ENCODE measurements at regions of chr6 and their contacts with region 1.

Region 1: DNA sequence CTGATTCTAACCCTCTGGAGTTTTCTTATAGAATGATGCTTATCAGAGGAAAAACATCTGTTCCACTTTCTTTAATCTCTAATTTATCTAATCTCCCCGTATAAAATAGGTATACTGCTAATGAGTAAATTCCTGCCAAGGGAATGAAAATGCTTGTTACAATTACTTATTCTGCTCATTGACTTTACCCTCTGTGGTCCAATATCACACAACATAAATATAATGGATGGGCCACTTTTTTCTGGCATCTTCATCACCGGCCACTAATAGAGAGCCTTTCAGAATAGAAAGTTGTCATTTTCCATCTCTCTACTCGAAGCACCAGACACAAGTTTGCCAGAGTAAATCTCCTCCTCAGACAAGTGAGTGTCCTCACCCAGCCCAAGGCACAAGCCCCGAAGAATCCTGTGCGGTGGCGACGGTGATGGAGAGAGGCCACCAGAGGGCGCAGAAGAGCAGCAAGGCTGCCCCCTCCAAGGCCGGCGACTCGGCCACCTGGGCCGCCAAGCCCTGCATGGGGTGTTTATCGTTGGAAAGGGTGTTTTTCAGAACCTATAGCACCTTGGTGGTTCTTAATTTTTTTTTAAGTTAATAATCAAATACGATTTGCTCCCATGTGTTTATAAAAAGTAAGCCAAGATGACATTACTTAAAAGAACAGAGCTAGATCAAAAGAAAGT is 212.9 kb upstream of the ARID1B start:
- DNase-seq: peak; percentile 83 to 93
- ATAC-seq: peak; percentile 93
- H3K4me3 ChIP-seq: no peak overlapping the region
- H3K27ac ChIP-seq: no peak overlapping the region
- H3K4me1 ChIP-seq: no peaks in the 10 kb centered on the region
- H3K27me3 ChIP-seq: peaks cover 0 to 2% of the 10 kb centered on the region in 2 donors

Region 2: GRCh38 chr6:155327326-155328073 is 1236.8 kb before region 1 on chr6:
- intact Hi-C with region 1: loop called in 1 of 2 experiments (anchors 10 kb)
- DNase-seq: peak; percentile 61 to 80
- ATAC-seq: peak; percentile 82
- H3K4me3 ChIP-seq: no peak overlapping the region
- H3K27ac ChIP-seq: no peak overlapping the region
- H3K4me1 ChIP-seq: no peaks in the 10 kb centered on the region
- H3K27me3 ChIP-seq: no peaks in the 10 kb centered on the region

Region 3: GRCh38 chr6:156686995-156687788 is 122.9 kb after region 1 on chr6:
- intact Hi-C with region 1: loop called (anchors 5 to 10 kb)
- DNase-seq: peak; percentile 95 to 97
- ATAC-seq: peak; percentile 97
- H3K4me3 ChIP-seq: peak overlapping the region; percentile 89 to 97
- H3K27ac ChIP-seq: peak overlapping the region; percentile 94 to 99
- H3K4me1 ChIP-seq: peaks cover 1 to 2% of the 10 kb centered on the region in 2 donors
- H3K27me3 ChIP-seq: no peaks in the 10 kb centered on the region

Region 4: DNA sequence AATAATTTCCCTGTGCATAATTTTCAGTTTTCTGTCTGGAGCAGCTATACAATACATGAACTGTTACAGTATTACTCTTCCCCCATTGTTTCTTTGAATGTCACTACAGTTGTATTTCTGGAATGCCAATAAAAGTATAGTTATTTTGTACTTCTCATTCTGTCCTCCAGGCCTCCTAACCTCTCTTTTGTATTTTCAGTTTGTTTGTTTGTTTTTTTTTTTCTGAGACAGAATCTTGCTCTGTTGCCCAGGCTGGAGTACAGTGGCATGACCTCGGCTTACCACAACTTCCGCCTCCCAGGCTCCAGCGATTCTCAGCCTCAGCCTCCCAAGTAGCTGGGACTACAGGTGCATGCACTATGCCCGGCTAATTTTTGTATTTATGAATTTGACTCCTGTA is 196.1 kb after region 1 on chr6:
- intact Hi-C with region 1: loop called in 1 of 2 experiments (anchors 5 kb)
- DNase-seq: no peak
- ATAC-seq: no peak
- H3K4me3 ChIP-seq: no peak overlapping the region
- H3K27ac ChIP-seq: no peak overlapping the region
- H3K4me1 ChIP-seq: no peaks in the 10 kb centered on the region
- H3K27me3 ChIP-seq: no peaks in the 10 kb centered on the region

Region 5: GRCh38 chr6:157184202-157185020 is 620.1 kb after region 1 on chr6:
- intact Hi-C with region 1: loop called (anchors 5 kb)
- DNase-seq: peak; percentile 81 to 91
- ATAC-seq: peak; percentile 90
- H3K4me3 ChIP-seq: no peak overlapping the region
- H3K27ac ChIP-seq: peak overlapping the region in 1 of 2 donors; percentile 20
- H3K4me1 ChIP-seq: no peaks in the 10 kb centered on the region
- H3K27me3 ChIP-seq: no peaks in the 10 kb centered on the region

Measured in aorta (tissue), 5 donors.